ENCODE measurements at regions of chr1 and their contacts with region 1.

Region 1: DNA sequence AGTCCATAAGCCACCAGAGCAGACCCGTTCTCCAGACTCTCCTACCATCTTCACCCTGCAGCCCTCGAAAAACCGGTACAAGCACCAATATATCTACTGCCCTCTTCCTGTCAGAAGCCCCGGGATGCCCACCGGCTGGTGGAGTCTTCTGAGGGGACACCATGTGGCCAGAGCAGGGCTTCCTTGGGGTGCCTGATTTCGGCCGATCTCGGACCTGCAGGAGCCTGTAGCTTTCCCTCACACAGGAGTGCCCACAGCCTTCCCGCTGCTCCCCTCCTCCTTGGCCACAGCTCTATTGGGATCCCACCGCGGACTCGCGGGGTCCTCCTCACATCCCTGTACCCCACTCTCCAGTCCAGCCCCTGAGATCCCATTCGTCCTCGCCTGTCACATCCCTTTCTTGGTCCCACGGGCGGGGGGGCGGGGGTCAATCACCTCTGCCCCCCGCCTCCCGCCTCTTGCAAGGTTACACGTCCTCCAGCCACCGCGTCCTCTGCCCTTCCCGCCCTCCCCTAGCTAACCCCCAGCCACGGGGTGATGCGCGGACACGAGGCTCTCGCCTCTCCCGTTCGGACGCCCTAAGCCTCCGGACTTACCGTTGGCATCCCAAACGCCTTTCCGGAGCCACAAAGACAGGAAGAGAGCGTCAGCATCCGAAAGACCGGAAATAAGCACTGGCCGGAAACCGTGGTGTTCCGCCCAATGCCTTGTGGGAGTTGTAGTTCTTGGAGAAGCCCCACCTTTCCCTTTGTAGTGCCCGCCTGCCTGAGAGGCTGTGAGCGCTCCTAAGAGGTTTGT is at the start of gene SSR2:
- DNase-seq: peak; percentile 89
- H3K4me3 ChIP-seq: peak within 1 kb of the TSS; percentile 67 to 96
- H3K27ac ChIP-seq: peak within 1 kb of the TSS; percentile 44 to 82; a peak in 3 of 4 replicates
- H3K4me1 ChIP-seq: peaks cover 7 to 10% of the 10 kb centered on the region in 2 experiments; a peak in 3 of 4 replicates
- H3K27me3 ChIP-seq: no peaks in the 10 kb centered on the region
- CTCF ChIP-seq: 0 out of 2 replicates have a peak, but pooled peaks have one; percentile 7
- EP300 ChIP-seq: peak in 1 of 2 experiments; percentile 17; a peak in 1 of 4 replicates
- RAD21 ChIP-seq: no peak
- polyA plus RNA-seq, gene SSR2: 1,136 and 1,763 TPM in 2 replicates

Region 2: GRCh38 chr1:155776404-155776803 is 244.1 kb before region 1 on chr1:
- CTCF ChIA-PET with region 1: no interaction called
- POLR2A ChIA-PET with region 1: no interaction called
- DNase-seq: no peak
- H3K4me3 ChIP-seq: no peak overlapping the region
- H3K27ac ChIP-seq: no peak overlapping the region
- H3K4me1 ChIP-seq: no peaks in the 10 kb centered on the region
- H3K27me3 ChIP-seq: no peaks in the 10 kb centered on the region
- CTCF ChIP-seq: no peak
- EP300 ChIP-seq: no peak
- RAD21 ChIP-seq: no peak

Region 3: GRCh38 chr1:156054500-156055280 is 34.2 kb after region 1 on chr1 and contains the start of gene LAMTOR2:
- CTCF ChIA-PET with region 1: interaction called, 11 read pairs
- POLR2A ChIA-PET with region 1: no interaction called
- DNase-seq: peak; percentile 93
- H3K4me3 ChIP-seq: peak within 1 kb of the TSS; percentile 87 to 94
- H3K27ac ChIP-seq: peak within 1 kb of the TSS; percentile 93 to 100
- H3K4me1 ChIP-seq: peaks cover 6 to 17% of the 10 kb centered on the region in 2 experiments; a peak in 3 of 4 replicates
- H3K27me3 ChIP-seq: no peaks in the 10 kb centered on the region
- CTCF ChIP-seq: no peak
- EP300 ChIP-seq: no peak
- RAD21 ChIP-seq: no peak
- polyA plus RNA-seq, gene LAMTOR2: 184 and 230 TPM in 2 replicates